ENCODE measurements at regions of chr11 and their contacts with region 1.

Region 1: DNA sequence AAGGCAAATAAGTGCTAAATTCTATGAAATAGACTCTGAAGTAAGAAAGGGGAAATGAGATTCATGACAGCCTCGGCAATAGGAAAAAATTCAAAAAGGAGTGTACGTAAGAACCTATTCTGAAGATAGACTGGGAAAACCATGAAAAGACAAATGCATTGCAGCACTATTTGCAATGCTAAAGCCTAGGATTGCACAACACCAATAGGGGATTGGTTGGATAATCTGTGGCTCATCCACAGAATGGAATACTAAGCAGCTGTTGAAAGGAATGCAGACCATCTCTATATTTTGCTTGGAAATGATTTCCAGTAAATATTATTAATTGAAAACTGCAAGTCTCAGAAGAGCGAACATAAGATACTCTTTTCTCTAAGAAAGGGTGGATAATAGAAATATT is 91.7 kb upstream of the CLMP start:
- DNase-seq: no peak
- ATAC-seq: no peak
- H3K4me3 ChIP-seq: no peak overlapping the region
- H3K27ac ChIP-seq: no peak overlapping the region
- H3K4me1 ChIP-seq: no peaks in the 10 kb centered on the region
- H3K27me3 ChIP-seq: peaks cover 32% of the 10 kb centered on the region
- CTCF ChIP-seq: no peak

Region 2: GRCh38 chr11:122717264-122717867 is 569.4 kb before region 1 on chr11:
- CTCF ChIA-PET with region 1: no interaction called
- POLR2A ChIA-PET with region 1: no interaction called
- intact Hi-C with region 1: no loop called
- DNase-seq: no peak
- ATAC-seq: no peak; the same call in 1 of the 2 replicates
- H3K4me3 ChIP-seq: no peak overlapping the region
- H3K27ac ChIP-seq: no peak overlapping the region
- H3K4me1 ChIP-seq: peaks cover 24% of the 10 kb centered on the region
- H3K27me3 ChIP-seq: no peaks in the 10 kb centered on the region
- CTCF ChIP-seq: no peak

Region 3: DNA sequence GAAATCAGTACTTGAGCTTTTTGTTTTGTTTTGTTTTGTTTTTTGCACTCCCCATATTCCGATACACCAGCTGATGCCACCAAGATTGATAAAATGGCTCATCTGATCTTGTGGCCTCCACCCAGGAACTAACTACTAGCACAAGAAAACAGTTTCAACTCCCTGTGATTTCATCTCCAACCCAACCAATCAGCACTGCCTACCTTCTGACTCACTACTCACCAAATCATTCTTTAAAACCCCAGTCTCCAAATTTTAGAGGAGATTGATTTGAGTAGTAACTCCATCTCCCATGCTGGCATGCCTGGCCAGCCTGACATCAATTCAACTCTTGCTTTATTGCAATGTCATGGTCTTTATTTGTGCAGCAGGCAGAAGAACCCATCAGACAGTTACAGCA is 464.5 kb before region 1 on chr11:
- CTCF ChIA-PET with region 1: no interaction called
- POLR2A ChIA-PET with region 1: no interaction called
- intact Hi-C with region 1: no loop called
- DNase-seq: no peak
- ATAC-seq: no peak
- H3K4me3 ChIP-seq: no peak overlapping the region
- H3K27ac ChIP-seq: no peak overlapping the region
- H3K4me1 ChIP-seq: peaks cover 6% of the 10 kb centered on the region; the same call in 1 of the 2 replicates
- H3K27me3 ChIP-seq: no peaks in the 10 kb centered on the region
- CTCF ChIP-seq: no peak

Region 4: DNA sequence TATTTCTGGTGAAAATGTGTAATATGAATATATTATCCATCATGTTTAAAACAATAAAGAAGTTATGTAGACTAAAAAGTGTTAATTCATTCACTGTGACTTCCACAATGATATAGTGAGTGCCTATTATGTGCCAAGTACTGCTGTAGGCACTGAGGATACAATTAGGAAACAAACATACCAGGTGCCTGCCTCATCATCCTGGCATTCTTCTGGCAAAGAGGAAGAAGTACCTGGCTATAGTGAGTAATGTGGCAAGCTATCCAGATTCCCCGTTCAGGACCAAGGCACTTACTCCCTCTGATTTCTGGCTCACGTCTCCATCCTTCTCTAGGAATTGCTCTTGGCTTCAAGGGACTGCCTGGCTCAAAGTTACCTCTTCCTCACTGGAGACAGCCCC is 14.2 kb before region 1 on chr11:
- CTCF ChIA-PET with region 1: no interaction called
- POLR2A ChIA-PET with region 1: interaction called, 41 read pairs
- intact Hi-C with region 1: no loop called
- DNase-seq: peak; percentile 83
- ATAC-seq: peak; percentile 87
- H3K4me3 ChIP-seq: no peak overlapping the region
- H3K27ac ChIP-seq: no peak overlapping the region
- H3K4me1 ChIP-seq: peaks cover 10% of the 10 kb centered on the region; the same call in 1 of the 2 replicates
- H3K27me3 ChIP-seq: no peaks in the 10 kb centered on the region
- CTCF ChIP-seq: no peak

Region 5: DNA sequence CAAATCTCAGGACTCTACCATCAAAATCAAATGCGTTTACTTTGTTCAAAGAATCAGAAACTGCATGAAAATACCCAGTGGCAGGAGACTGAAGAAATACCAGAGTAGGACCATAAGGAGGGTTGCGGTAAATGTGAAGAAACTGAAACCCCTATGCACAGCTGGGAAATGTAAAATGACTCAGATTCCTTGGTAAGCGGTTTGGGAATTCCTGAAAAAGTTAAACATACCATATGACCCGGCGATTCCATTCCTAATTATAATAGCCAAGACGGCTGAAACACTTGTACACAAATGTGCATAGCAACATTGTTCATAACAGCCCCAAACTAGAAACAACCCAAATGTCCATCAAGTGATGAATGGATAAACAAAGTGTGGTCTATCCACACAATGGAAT is 29.2 kb after region 1 on chr11:
- CTCF ChIA-PET with region 1: no interaction called
- POLR2A ChIA-PET with region 1: no interaction called
- intact Hi-C with region 1: no loop called
- DNase-seq: no peak
- ATAC-seq: no peak
- H3K4me3 ChIP-seq: no peak overlapping the region
- H3K27ac ChIP-seq: no peak overlapping the region
- H3K4me1 ChIP-seq: no peaks in the 10 kb centered on the region
- H3K27me3 ChIP-seq: peaks cover 35% of the 10 kb centered on the region; the same call in 1 of the 2 replicates
- CTCF ChIP-seq: no peak

Region 6: GRCh38 chr11:123461164-123461563 is 174.4 kb after region 1 on chr11:
- CTCF ChIA-PET with region 1: no interaction called
- POLR2A ChIA-PET with region 1: interaction called, 23 read pairs
- intact Hi-C with region 1: no loop called
- DNase-seq: no peak
- ATAC-seq: no peak; the same call in 1 of the 2 replicates
- H3K4me3 ChIP-seq: no peak overlapping the region
- H3K27ac ChIP-seq: peak overlapping the region; percentile 98
- H3K4me1 ChIP-seq: peaks cover 25% of the 10 kb centered on the region
- H3K27me3 ChIP-seq: no peaks in the 10 kb centered on the region
- CTCF ChIP-seq: no peak